Dorsolateral prefrontal cortex (tissue), 120 donors: ENCODE measurements at regions of chr3 and their contacts with region 1.

Region 1: DNA sequence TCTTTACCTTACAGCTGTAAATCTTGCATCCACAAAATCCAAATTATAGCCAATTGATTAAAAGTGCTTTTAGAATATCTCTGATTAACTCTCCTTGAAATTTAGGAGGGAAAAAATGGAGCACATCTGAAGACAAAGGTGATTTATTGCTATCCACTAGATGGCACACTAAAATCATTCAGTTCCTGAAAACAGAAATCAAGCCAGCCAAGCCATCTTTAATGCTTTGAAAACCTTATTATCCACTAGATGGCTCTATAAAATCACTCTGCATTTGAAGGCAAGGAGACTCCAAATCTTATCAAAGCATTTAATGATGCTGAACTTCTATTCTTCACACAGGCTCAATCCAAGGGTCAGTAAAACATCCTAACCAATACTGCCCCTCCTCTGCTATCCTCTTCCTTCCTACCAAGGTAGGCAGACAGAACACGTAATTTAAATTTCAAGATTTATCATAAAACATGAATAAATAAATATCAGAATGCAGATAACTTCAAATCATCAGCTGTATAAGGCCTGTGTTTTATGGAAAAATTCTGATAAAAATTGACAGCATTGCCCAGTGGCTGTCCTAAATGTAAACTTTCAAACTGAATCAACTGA is 48.4 kb downstream of the GOLIM4 start:
- DNase-seq: no peak
- H3K4me3 ChIP-seq: peak overlapping the region in 1 of 59 donors; percentile 16
- H3K27ac ChIP-seq: peak overlapping the region in 16 of 59 donors; percentile 4 to 59 (median 26)
- H3K27me3 ChIP-seq: no peaks in the 10 kb centered on the region
- CTCF ChIP-seq: peak; percentile 71 to 100 (median 97)

Region 2: GRCh38 chr3:168002786-168003368 is 44.4 kb before region 1 on chr3:
- intact Hi-C with region 1: no loop called
- DNase-seq: no peak
- H3K4me3 ChIP-seq: no peak overlapping the region
- H3K27ac ChIP-seq: no peak overlapping the region
- H3K27me3 ChIP-seq: no peaks in the 10 kb centered on the region
- CTCF ChIP-seq: no peak

Region 3: GRCh38 chr3:168095611-168096209 is 48.4 kb after region 1 on chr3 and contains the start of gene GOLIM4:
- intact Hi-C with region 1: loop called (anchors 1 to 2 kb)
- DNase-seq: peak; percentile 61 to 96 (median 92)
- H3K4me3 ChIP-seq: peak within 1 kb of the TSS; percentile 64 to 96 (median 82)
- H3K27ac ChIP-seq: peak within 1 kb of the TSS; percentile 64 to 98 (median 91)
- H3K27me3 ChIP-seq: peaks cover 0 to 2% (median 0%) of the 10 kb centered on the region in 45 donors
- CTCF ChIP-seq: peak in 32 of 56 donors; percentile 8 to 62 (median 30)
- total RNA-seq, gene GOLIM4: 26.3 to 108 (median 49.7) TPM

Region 4: GRCh38 chr3:168165390-168166269 is 118.3 kb after region 1 on chr3:
- intact Hi-C with region 1: loop called (anchors 1 to 2 kb)
- DNase-seq: peak in 4 of 10 donors; percentile 20 to 78 (median 52)
- H3K4me3 ChIP-seq: peak overlapping the region in 15 of 59 donors; percentile 3 to 47 (median 21)
- H3K27ac ChIP-seq: peak overlapping the region in 14 of 59 donors; percentile 1 to 60 (median 28)
- H3K27me3 ChIP-seq: no peaks in the 10 kb centered on the region
- CTCF ChIP-seq: peak; percentile 60 to 95 (median 86)

Region 5: DNA sequence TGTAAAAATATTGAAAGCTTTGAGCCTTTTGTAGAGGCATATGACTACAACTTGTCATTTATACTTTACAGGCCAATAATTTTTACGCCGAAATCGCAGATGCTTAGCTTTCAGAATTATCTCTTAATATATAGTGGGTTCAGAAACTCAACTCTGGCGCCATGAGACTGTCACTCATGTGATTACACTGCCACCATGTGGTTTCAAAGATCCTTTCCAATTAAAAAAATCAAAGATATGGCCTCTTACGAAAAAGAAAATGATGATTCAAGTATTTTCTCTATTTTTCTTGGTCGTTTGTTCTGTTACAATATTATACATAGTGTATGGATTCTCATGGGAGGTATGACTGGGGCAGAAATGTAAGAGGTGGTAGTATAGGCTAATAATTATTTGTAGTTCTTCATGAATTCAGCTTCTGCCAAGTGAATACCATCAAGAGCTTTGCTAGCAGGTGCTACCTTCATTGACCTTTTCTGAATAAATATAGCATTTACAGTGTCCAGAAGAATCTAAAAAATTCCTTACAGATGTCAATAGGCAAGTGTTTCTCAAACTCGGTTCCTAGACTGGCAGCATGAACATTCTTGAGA is 800.1 kb after region 1 on chr3:
- intact Hi-C with region 1: loop called (anchors 5 to 10 kb)
- DNase-seq: peak in 1 of 10 donors; percentile 20
- H3K4me3 ChIP-seq: peak overlapping the region in 22 of 59 donors; percentile 1 to 42 (median 20)
- H3K27ac ChIP-seq: no peak overlapping the region
- H3K27me3 ChIP-seq: peaks cover 0 to 16% (median 0%) of the 10 kb centered on the region in 45 donors
- CTCF ChIP-seq: peak; percentile 52 to 88 (median 72)